Calu3 (cell line): ENCODE measurements at regions of chr5 and their contacts with region 1.

Region 1: DNA sequence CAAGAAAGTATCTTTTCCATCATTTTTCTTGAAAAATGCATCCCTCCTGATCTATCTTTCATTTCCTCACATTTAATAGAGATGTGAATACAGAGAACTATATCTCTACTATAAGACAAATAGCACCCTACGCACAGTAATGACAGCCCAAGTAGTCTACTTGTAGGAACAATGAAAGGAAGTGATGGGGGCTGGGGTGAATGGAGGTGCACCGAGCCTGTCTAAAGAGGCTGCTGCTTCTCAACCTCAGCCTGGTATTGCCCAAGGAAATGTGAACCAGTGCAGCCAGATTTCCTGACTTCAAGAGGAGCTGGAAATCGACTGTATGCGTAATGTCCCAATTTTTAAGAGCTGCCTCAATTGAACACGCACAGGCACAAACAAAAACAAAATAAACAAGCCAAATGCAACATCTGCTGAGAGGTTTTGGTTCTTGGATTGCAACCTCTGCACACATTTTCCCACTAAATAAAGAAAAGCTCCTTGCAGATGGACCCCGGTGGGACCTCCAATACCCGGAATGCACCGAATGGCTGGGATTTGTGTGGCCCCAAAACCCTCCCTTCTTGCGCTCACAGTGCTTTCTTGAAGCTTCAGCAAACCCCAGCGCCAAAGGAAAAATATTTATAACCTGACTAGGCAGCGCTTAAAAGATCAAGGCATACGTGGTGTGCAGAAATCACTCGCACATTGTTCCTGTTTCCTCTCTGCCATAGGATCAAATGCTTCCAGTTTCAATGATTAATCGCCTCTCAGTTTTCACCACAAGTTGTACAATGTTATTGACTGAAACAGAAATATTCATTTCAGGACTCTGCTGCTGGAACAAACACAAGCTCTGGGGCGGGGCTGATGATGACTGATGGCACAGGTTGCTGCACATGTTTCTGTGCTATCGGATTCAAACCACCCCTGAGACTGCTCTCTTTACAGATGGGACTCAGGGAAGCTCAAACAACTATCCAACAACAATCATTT is 68.3 kb downstream of the KCNIP1 start:
- DNase-seq: peak; percentile 62
- H3K4me3 Mint-ChIP-seq: peak overlapping the region; percentile 62
- H3K27ac Mint-ChIP-seq: peak overlapping the region; percentile 23
- H3K4me1 Mint-ChIP-seq: peaks cover 31% of the 10 kb centered on the region
- H3K27me3 Mint-ChIP-seq: peaks cover 60% of the 10 kb centered on the region
- CTCF ChIP-seq: no peak

Region 2: GRCh38 chr5:170070556-170071412 is 501.4 kb before region 1 on chr5:
- CTCF ChIA-PET with region 1: no interaction called
- intact Hi-C with region 1: no loop called
- DNase-seq: peak; percentile 53
- H3K4me3 Mint-ChIP-seq: no peak overlapping the region
- H3K27ac Mint-ChIP-seq: no peak overlapping the region
- H3K4me1 Mint-ChIP-seq: no peaks in the 10 kb centered on the region
- H3K27me3 Mint-ChIP-seq: peaks cover 86% of the 10 kb centered on the region
- CTCF ChIP-seq: peak; percentile 87

Region 3: GRCh38 chr5:170411100-170411499 is 161.1 kb before region 1 on chr5:
- CTCF ChIA-PET with region 1: no interaction called
- intact Hi-C with region 1: no loop called
- DNase-seq: no peak
- H3K4me3 Mint-ChIP-seq: no peak overlapping the region
- H3K27ac Mint-ChIP-seq: no peak overlapping the region
- H3K4me1 Mint-ChIP-seq: no peaks in the 10 kb centered on the region
- H3K27me3 Mint-ChIP-seq: peaks cover 79% of the 10 kb centered on the region
- CTCF ChIP-seq: no peak

Region 4: GRCh38 chr5:170508660-170509322 is 63.4 kb before region 1 on chr5:
- CTCF ChIA-PET with region 1: no interaction called
- intact Hi-C with region 1: loop called (anchors 5 kb)
- DNase-seq: no peak
- H3K4me3 Mint-ChIP-seq: no peak overlapping the region
- H3K27ac Mint-ChIP-seq: no peak overlapping the region
- H3K4me1 Mint-ChIP-seq: peaks cover 17% of the 10 kb centered on the region
- H3K27me3 Mint-ChIP-seq: peaks cover 47% of the 10 kb centered on the region
- CTCF ChIP-seq: peak; percentile 16